ENCODE measurements at regions of chr1 and their contacts with region 1.

Region 1: GRCh38 chr1:176384841-176385240 is 78.1 kb upstream of the PAPPA2 start:
- DNase-seq: no peak
- ATAC-seq: no peak
- H3K4me3 ChIP-seq: no peak overlapping the region
- H3K4me3 Mint-ChIP-seq: no peak overlapping the region
- H3K27ac ChIP-seq: no peak overlapping the region
- H3K27ac Mint-ChIP-seq: no peak overlapping the region
- H3K4me1 ChIP-seq: no peaks in the 10 kb centered on the region
- H3K4me1 Mint-ChIP-seq: no peaks in the 10 kb centered on the region
- H3K27me3 ChIP-seq: no peaks in the 10 kb centered on the region
- H3K27me3 Mint-ChIP-seq: peaks cover 0 to 4% of the 10 kb centered on the region in 2 donors

Region 2: GRCh38 chr1:176183618-176184017 is 201.2 kb before region 1 on chr1:
- CTCF ChIA-PET with region 1: no interaction called
- POLR2A ChIA-PET with region 1: no interaction called
- DNase-seq: no peak
- ATAC-seq: no peak
- H3K4me3 ChIP-seq: no peak overlapping the region
- H3K4me3 Mint-ChIP-seq: no peak overlapping the region
- H3K27ac ChIP-seq: no peak overlapping the region
- H3K27ac Mint-ChIP-seq: peak overlapping the region in 1 of 2 donors; percentile 54
- H3K4me1 ChIP-seq: peaks cover 0 to 2% of the 10 kb centered on the region in 2 experiments
- H3K4me1 Mint-ChIP-seq: peaks cover 55 to 61% (median 56%) of the 10 kb centered on the region in 3 donors
- H3K27me3 ChIP-seq: no peaks in the 10 kb centered on the region
- H3K27me3 Mint-ChIP-seq: no peaks in the 10 kb centered on the region

Region 3: DNA sequence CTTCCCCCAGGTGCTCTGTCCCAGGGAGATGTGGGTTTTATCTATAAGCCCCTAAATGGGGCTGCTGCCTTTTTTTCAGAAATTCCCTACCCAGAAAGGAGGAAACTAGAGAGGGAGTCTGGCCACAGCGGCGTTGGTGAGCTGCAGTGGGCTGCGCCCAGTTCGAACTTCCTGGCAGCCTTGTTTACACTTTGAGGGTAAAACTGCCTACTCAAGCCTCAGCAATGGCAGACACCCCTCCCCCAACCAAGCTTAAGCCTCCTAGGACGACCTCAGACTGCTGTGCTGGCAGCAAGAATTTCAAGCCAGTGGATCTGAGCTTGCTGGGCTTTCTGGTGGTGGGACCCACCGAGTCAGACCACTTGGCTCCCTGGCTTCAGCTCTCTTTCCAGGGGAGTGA is 31.9 kb after region 1 on chr1:
- CTCF ChIA-PET with region 1: no interaction called
- POLR2A ChIA-PET with region 1: interaction called in 1 of 2 experiments, 10 read pairs
- DNase-seq: no peak
- ATAC-seq: no peak
- H3K4me3 ChIP-seq: no peak overlapping the region
- H3K4me3 Mint-ChIP-seq: no peak overlapping the region
- H3K27ac ChIP-seq: no peak overlapping the region
- H3K27ac Mint-ChIP-seq: no peak overlapping the region
- H3K4me1 ChIP-seq: no peaks in the 10 kb centered on the region
- H3K4me1 Mint-ChIP-seq: no peaks in the 10 kb centered on the region
- H3K27me3 ChIP-seq: peaks cover 0 to 11% of the 10 kb centered on the region in 2 experiments
- H3K27me3 Mint-ChIP-seq: peaks cover 0 to 11% of the 10 kb centered on the region in 2 donors

Region 4: GRCh38 chr1:176880954-176881595 is 496.2 kb after region 1 on chr1:
- CTCF ChIA-PET with region 1: no interaction called
- POLR2A ChIA-PET with region 1: no interaction called
- DNase-seq: peak in 12 of 35 experiments; percentile 3 to 35 (median 10)
- ATAC-seq: no peak
- H3K4me3 ChIP-seq: no peak overlapping the region
- H3K4me3 Mint-ChIP-seq: no peak overlapping the region
- H3K27ac ChIP-seq: no peak overlapping the region
- H3K27ac Mint-ChIP-seq: no peak overlapping the region
- H3K4me1 ChIP-seq: no peaks in the 10 kb centered on the region
- H3K4me1 Mint-ChIP-seq: no peaks in the 10 kb centered on the region
- H3K27me3 ChIP-seq: peaks cover 0 to 3% of the 10 kb centered on the region in 2 experiments
- H3K27me3 Mint-ChIP-seq: peaks cover 3 to 8% of the 10 kb centered on the region in 2 donors